ENCODE measurements at regions of chr10 and their contacts with region 1.

Region 1: DNA sequence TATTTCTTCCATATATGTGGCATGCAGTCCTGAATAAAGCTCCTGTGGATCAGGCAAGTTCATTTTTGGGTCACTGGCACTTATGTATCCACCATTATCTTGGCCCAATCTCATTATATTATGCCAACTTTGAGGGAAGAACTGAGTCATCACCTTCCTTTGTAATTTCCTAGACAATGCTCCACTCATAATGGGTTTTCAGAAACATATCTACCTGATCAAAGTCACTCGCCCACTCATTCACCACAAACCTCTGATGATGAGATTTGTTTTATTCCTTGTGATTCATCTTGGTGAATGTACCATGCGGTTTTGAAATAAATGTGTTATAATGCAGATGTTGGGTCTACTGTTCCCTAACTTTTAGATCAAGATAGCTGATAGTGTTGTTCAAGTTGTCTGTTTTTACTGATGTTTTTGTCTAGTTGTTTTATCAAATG is 525.8 kb downstream of the KIF20B start:
- DNase-seq: peak; percentile 32 to 72
- H3K4me3 ChIP-seq: no peak overlapping the region
- H3K27ac ChIP-seq: no peak overlapping the region
- H3K4me1 ChIP-seq: no peaks in the 10 kb centered on the region
- H3K27me3 ChIP-seq: no peaks in the 10 kb centered on the region
- CTCF ChIP-seq: no peak

Region 2: GRCh38 chr10:89921422-89921821 is 305.8 kb before region 1 on chr10:
- CTCF ChIA-PET with region 1: no interaction called
- POLR2A ChIA-PET with region 1: interaction called, 3 read pairs
- intact Hi-C with region 1: loop called (anchors 2 kb)
- DNase-seq: peak; percentile 64 to 99
- H3K4me3 ChIP-seq: no peak overlapping the region
- H3K27ac ChIP-seq: peak overlapping the region; percentile 71
- H3K4me1 ChIP-seq: peaks cover 61% of the 10 kb centered on the region
- H3K27me3 ChIP-seq: no peaks in the 10 kb centered on the region
- CTCF ChIP-seq: no peak

Region 3: DNA sequence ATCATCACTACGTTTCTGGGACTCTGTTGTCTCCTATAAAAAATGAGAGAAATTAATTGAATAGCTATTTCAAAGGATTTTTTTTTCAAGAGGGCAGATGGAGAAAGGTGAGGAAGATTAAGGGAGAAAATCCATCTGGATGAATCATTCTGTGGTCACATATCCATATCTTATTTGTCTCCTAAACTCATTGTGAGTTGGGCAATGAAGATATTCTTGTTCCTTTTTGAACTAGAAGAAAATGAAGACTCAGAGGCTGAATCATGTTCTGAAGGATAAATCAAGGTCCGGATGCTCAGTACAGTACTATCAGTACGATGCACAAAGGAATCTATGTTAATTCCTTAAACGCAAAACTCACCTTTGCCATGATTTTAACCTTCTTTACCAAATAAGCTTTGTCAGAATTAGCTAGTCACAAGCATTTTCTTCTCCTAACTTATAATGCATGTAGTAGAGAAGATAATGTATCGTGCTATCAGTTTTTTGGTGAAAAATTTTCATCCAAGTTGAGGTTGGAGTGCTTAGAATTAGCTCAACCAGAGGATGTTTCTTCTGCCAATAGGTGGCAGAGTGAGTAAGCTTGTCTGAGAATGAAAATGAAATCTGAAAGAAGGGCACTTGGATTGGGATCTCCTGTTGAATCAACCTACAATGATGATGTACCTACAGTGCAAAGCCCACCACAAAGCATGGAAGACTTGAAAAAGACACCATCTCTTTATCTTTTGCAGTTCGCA is 79.0 kb before region 1 on chr10:
- CTCF ChIA-PET with region 1: no interaction called
- POLR2A ChIA-PET with region 1: interaction called, 3 read pairs
- intact Hi-C with region 1: loop called (anchors 2 kb)
- DNase-seq: peak in 1 of 2 experiments; percentile 44
- H3K4me3 ChIP-seq: no peak overlapping the region
- H3K27ac ChIP-seq: no peak overlapping the region
- H3K4me1 ChIP-seq: no peaks in the 10 kb centered on the region
- H3K27me3 ChIP-seq: no peaks in the 10 kb centered on the region
- CTCF ChIP-seq: peak; percentile 43; the same call in 1 of the 2 replicates

Region 4: DNA sequence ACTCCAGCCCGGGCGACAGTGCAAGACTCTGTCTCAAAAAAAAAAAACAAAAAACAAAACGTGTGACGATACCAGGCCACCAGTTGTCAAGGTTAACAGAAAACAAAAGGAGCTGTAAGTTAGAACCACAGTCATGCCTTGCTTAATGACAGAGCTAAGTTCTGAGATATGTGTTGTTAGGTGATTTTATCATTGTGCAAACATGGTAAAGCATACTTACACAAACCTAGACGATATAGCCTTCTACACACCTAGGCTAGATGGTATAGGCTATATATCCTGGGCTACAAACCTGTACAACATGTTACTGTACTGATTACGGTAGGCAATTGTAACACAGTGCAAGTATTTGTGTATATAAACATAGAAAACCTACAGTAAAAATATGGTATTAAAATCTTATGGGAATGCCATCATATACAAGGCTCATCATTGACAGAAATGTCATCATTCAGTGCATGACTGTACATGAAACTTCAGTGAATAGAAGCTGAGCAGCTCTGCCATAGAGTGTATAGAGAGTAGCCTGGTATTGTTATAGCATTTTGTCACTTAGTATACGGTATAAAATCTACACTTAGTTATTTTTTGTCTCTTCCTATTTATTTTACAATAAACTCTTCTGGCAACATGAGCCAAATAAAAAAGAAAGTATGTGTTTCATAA is 66.5 kb after region 1 on chr10:
- CTCF ChIA-PET with region 1: no interaction called
- POLR2A ChIA-PET with region 1: no interaction called
- intact Hi-C with region 1: loop called (anchors 2 kb)
- DNase-seq: no peak
- H3K4me3 ChIP-seq: no peak overlapping the region
- H3K27ac ChIP-seq: no peak overlapping the region
- H3K4me1 ChIP-seq: no peaks in the 10 kb centered on the region
- H3K27me3 ChIP-seq: no peaks in the 10 kb centered on the region
- CTCF ChIP-seq: no peak

Region 5: GRCh38 chr10:90407161-90407571 is 179.9 kb after region 1 on chr10:
- CTCF ChIA-PET with region 1: no interaction called
- POLR2A ChIA-PET with region 1: no interaction called
- intact Hi-C with region 1: no loop called
- DNase-seq: peak; percentile 21 to 76
- H3K4me3 ChIP-seq: no peak overlapping the region
- H3K27ac ChIP-seq: no peak overlapping the region
- H3K4me1 ChIP-seq: peaks cover 16% of the 10 kb centered on the region
- H3K27me3 ChIP-seq: no peaks in the 10 kb centered on the region
- CTCF ChIP-seq: no peak

Region 6: GRCh38 chr10:90587081-90587491 is 359.8 kb after region 1 on chr10:
- CTCF ChIA-PET with region 1: no interaction called
- POLR2A ChIA-PET with region 1: no interaction called
- intact Hi-C with region 1: loop called (anchors 1 kb)
- DNase-seq: peak; percentile 15 to 54
- H3K4me3 ChIP-seq: no peak overlapping the region
- H3K27ac ChIP-seq: no peak overlapping the region
- H3K4me1 ChIP-seq: peaks cover 15% of the 10 kb centered on the region
- H3K27me3 ChIP-seq: no peaks in the 10 kb centered on the region
- CTCF ChIP-seq: no peak

Region 7: GRCh38 chr10:90592638-90593302 is 365.5 kb after region 1 on chr10:
- CTCF ChIA-PET with region 1: no interaction called
- POLR2A ChIA-PET with region 1: no interaction called
- intact Hi-C with region 1: loop called (anchors 1 kb)
- DNase-seq: peak in 1 of 2 experiments; percentile 63
- H3K4me3 ChIP-seq: no peak overlapping the region
- H3K27ac ChIP-seq: no peak overlapping the region
- H3K4me1 ChIP-seq: no peaks in the 10 kb centered on the region
- H3K27me3 ChIP-seq: no peaks in the 10 kb centered on the region
- CTCF ChIP-seq: peak; percentile 62